Caco-2 (cell line): ENCODE measurements at regions of chr9 and their contacts with region 1.

Region 1: GRCh38 chr9:115289757-115290208 is 171.8 kb upstream of the TNC start:
- DNase-seq: no peak
- H3K4me3 ChIP-seq: no peak overlapping the region
- H3K4me3 Mint-ChIP-seq: no peak overlapping the region
- H3K27ac Mint-ChIP-seq: no peak overlapping the region
- H3K4me1 ChIP-seq: peaks cover 32% of the 10 kb centered on the region
- H3K4me1 Mint-ChIP-seq: peaks cover 29% of the 10 kb centered on the region
- H3K27me3 ChIP-seq: no peaks in the 10 kb centered on the region
- H3K27me3 Mint-ChIP-seq: no peaks in the 10 kb centered on the region
- CTCF ChIP-seq: no peak

Region 2: DNA sequence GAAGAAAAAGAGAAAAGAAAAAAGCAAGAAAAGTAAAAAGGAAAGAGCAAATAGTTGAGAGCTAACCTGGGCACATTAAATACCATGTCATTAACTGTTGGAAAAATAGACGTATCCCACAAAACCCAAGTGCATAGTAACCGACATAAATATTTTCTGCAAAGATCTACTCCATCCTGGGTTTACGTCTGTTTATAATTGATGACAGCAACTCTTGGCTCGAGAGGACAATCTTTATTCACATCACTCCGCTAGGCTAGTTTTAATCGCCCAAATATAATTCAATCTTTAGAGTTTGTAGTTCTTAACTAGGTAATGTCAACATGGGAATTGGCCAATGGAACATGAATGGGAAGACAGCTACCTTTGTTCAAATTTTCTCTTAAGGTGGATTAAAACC is 149.9 kb after region 1 on chr9:
- CTCF ChIA-PET with region 1: no interaction called
- POLR2A ChIA-PET with region 1: no interaction called
- intact Hi-C with region 1: loop called (anchors 10 kb)
- DNase-seq: no peak
- H3K4me3 ChIP-seq: no peak overlapping the region
- H3K4me3 Mint-ChIP-seq: no peak overlapping the region
- H3K27ac Mint-ChIP-seq: no peak overlapping the region
- H3K4me1 ChIP-seq: no peaks in the 10 kb centered on the region
- H3K4me1 Mint-ChIP-seq: no peaks in the 10 kb centered on the region
- H3K27me3 ChIP-seq: no peaks in the 10 kb centered on the region
- H3K27me3 Mint-ChIP-seq: no peaks in the 10 kb centered on the region
- CTCF ChIP-seq: no peak

Region 3: GRCh38 chr9:115495052-115495635 is 205.4 kb after region 1 on chr9:
- CTCF ChIA-PET with region 1: no interaction called
- POLR2A ChIA-PET with region 1: no interaction called
- intact Hi-C with region 1: loop called (anchors 1 kb)
- DNase-seq: peak in 1 of 2 experiments; percentile 44
- H3K4me3 ChIP-seq: no peak overlapping the region
- H3K4me3 Mint-ChIP-seq: no peak overlapping the region
- H3K27ac Mint-ChIP-seq: no peak overlapping the region
- H3K4me1 ChIP-seq: peaks cover 20% of the 10 kb centered on the region
- H3K4me1 Mint-ChIP-seq: peaks cover 10% of the 10 kb centered on the region
- H3K27me3 ChIP-seq: no peaks in the 10 kb centered on the region
- H3K27me3 Mint-ChIP-seq: peaks cover 3% of the 10 kb centered on the region
- CTCF ChIP-seq: no peak